A673 (cell line): ENCODE measurements at regions of chr2 and their contacts with region 1.

Region 1: DNA sequence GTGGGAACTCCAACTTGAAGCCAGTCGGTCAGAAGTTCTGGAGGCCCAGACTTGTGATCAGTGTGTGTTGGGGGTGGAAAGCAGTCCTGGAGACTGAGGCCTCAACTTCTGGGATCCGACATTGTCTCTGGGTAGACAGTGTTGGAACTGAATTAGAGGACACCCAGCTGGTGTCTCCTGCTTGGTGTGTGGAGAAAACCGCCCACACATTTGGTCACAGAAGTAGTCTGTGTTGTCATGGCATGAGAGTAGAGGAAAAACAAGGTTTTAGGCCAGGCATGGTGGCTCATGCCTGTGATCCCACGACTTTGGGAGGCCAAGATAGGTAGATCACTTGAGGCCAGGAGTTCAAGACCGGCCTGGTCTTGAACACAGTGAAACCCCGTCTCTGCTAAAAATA is 51.5 kb downstream of the PUM2 start:
- DNase-seq: no peak
- H3K4me3 ChIP-seq: no peak overlapping the region
- H3K27ac ChIP-seq: peak overlapping the region; percentile 7
- H3K4me1 ChIP-seq: peaks cover 4% of the 10 kb centered on the region
- H3K27me3 ChIP-seq: no peaks in the 10 kb centered on the region
- CTCF ChIP-seq: no peak

Region 2: DNA sequence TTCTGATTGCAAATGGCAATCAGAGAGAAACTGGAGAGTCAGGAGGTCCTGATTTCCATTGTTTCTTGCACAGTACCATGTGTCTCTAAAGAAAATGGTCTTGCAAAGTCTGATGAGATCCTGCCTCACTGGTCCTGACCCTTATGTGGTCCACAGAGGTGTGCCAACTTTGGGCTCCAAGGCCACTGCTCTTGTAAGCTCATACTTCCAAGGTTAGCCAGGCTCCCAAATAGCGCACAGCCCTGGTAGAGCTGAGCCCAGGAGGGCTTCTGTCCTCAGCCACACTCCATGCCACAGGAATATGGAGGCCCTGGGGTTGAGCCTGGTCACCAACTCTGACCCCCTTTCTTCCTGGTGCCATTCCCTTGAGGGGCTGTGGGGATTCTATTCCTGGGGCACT is 154.9 kb before region 1 on chr2:
- CTCF ChIA-PET with region 1: no interaction called
- POLR2A ChIA-PET with region 1: interaction called, 11 read pairs
- intact Hi-C with region 1: no loop called
- DNase-seq: no peak
- H3K4me3 ChIP-seq: no peak overlapping the region
- H3K27ac ChIP-seq: no peak overlapping the region
- H3K4me1 ChIP-seq: peaks cover 3% of the 10 kb centered on the region
- H3K27me3 ChIP-seq: no peaks in the 10 kb centered on the region
- CTCF ChIP-seq: no peak

Region 3: DNA sequence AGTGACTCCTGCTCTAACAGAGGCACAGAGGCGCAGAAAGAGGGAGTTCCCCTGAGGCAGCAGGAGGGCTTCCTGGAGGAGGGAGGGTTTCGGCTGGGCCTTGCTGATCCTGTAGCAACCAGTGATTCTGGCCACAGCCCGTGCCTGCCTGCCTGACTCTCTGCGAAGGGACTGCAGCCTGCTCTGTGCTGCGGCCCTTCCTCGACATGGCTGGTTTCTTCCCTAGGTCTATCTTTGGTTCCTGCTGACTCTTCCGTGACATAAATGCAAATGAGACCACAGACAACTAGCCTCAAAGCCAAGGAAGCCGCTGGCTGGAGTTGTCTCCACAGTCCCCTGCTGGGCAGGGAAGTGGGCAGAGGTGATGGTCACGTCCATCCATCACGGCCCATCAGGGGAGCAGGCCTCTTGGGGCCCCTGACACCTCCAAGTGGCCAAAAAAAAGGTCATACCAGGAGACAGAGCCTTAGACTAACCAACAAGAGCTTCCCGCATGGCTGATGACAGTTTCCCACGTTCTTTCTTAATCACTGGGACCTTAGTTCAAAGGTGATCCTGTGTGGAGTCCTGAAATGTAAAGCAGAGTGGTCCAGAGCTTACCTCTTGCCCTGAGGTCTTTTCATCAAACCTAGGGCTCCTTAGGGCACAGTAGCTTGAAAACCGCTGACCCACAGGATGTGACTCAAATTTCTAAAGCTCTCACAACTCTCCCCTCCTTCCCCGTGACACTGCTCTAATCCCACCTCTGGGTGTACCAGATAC is 296.5 kb after region 1 on chr2:
- CTCF ChIA-PET with region 1: no interaction called
- POLR2A ChIA-PET with region 1: no interaction called
- intact Hi-C with region 1: no loop called
- DNase-seq: no peak
- H3K4me3 ChIP-seq: no peak overlapping the region
- H3K27ac ChIP-seq: no peak overlapping the region
- H3K4me1 ChIP-seq: no peaks in the 10 kb centered on the region
- H3K27me3 ChIP-seq: no peaks in the 10 kb centered on the region
- CTCF ChIP-seq: no peak